IMR-90 (cell line): ENCODE measurements at regions of chr9 and their contacts with region 1.

Region 1: DNA sequence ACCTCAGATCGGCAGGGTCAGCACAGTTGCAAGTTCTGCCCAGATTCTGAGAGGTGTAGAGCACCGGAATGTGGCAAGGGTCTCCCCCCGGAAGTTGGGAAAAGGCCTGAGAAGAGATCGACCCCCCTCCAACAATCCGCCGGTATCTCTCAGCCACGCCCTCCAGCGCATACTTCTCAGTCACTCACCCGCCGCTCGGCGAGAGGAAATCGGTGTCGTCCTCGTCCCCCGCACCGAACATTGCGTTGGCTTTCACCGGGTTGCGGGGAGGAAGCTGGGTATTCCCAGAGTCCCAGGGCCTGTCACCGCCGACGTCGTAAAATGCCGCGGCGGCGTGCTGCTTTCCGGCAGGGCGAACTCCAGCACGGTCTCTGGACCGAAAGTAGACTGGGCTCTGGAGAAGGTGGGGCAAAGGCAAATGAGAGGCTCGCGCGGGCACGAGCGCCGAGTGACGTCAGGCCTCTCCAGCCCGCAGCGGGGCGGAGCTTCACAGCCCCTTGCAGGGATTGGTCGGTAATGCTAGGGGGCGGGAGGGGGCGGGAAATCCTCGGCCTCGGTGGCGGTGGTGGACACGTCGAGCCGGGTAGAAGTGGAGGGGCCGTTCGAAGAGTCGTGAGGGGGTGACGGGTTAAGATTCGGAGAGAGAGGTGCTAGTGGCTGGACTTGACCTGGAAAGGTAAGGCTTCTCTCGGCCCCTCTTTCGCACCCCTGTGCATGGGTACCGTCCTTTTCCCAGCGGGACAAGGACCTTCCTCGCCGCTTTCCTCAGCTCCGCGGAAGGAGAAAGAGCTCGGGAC is at the starts of genes FKBP15 and SLC31A1:
- DNase-seq: peak; percentile 99
- ATAC-seq: peak; percentile 97
- H3K4me3 ChIP-seq: peak within 1 kb of the TSS; percentile 86
- H3K27ac ChIP-seq: peak within 1 kb of the TSS; percentile 95
- H3K4me1 ChIP-seq: peaks cover 10% of the 10 kb centered on the region
- H3K27me3 ChIP-seq: no peaks in the 10 kb centered on the region
- CTCF ChIP-seq: no peak
- POLR2A ChIP-seq: peak; percentile 95
- RAD21 ChIP-seq: no peak
- total RNA-seq, gene FKBP15: 25.5 and 25.6 TPM in 2 replicates
- total RNA-seq, gene SLC31A1: 23.3 and 27.5 TPM in 2 replicates

Region 2: GRCh38 chr9:113187935-113188595 is 33.1 kb before region 1 on chr9:
- CTCF ChIA-PET with region 1: no interaction called
- POLR2A ChIA-PET with region 1: no interaction called
- dilution Hi-C with region 1: no loop called
- in situ Hi-C with region 1: no loop called
- intact Hi-C with region 1: loop called (anchors 2 kb)
- DNase-seq: peak; percentile 94
- ATAC-seq: peak; percentile 94
- H3K4me3 ChIP-seq: no peak overlapping the region
- H3K27ac ChIP-seq: peak overlapping the region; percentile 52
- H3K4me1 ChIP-seq: peaks cover 6% of the 10 kb centered on the region
- H3K27me3 ChIP-seq: no peaks in the 10 kb centered on the region
- CTCF ChIP-seq: no peak
- POLR2A ChIP-seq: no peak
- RAD21 ChIP-seq: no peak

Region 3: DNA sequence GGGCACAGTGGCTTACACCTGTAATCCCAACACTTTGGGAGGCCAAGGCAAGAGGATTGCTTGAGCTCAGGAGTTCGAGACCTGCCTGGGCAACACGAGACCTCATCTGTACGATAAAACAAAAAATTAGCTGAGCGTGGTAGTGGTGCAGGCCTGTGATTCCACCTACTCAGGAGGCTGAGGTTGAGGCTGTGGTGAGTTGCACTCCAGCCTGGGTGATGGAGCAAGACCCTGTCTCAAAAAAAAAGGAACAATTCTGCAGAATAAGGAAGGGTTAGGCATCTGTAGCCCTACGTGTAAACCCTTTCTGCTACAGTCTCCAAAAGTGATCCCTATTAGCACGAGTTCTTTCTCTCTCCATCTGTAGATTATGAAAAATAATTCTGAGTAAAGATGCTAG is 34.2 kb after region 1 on chr9:
- CTCF ChIA-PET with region 1: interaction called, 7 read pairs
- POLR2A ChIA-PET with region 1: interaction called, 19 read pairs
- dilution Hi-C with region 1: no loop called
- in situ Hi-C with region 1: no loop called
- intact Hi-C with region 1: no loop called
- DNase-seq: no peak
- ATAC-seq: no peak
- H3K4me3 ChIP-seq: no peak overlapping the region
- H3K27ac ChIP-seq: no peak overlapping the region
- H3K4me1 ChIP-seq: no peaks in the 10 kb centered on the region
- H3K27me3 ChIP-seq: no peaks in the 10 kb centered on the region
- CTCF ChIP-seq: no peak
- POLR2A ChIP-seq: no peak
- RAD21 ChIP-seq: no peak

Region 4: GRCh38 chr9:113275157-113276131 is 54.2 kb after region 1 on chr9 and contains the starts of genes CDC26 and PRPF4:
- CTCF ChIA-PET with region 1: interaction called, 4 read pairs
- POLR2A ChIA-PET with region 1: no interaction called
- dilution Hi-C with region 1: no loop called
- in situ Hi-C with region 1: no loop called
- intact Hi-C with region 1: loop called (anchors 1 kb)
- DNase-seq: peak; percentile 99
- ATAC-seq: peak; percentile 95
- H3K4me3 ChIP-seq: peak within 1 kb of the TSS; percentile 74
- H3K27ac ChIP-seq: peak within 1 kb of the TSS; percentile 88
- H3K4me1 ChIP-seq: peaks cover 2% of the 10 kb centered on the region; the same call in 1 of the 2 replicates
- H3K27me3 ChIP-seq: no peaks in the 10 kb centered on the region
- CTCF ChIP-seq: no peak
- POLR2A ChIP-seq: peak; percentile 97
- RAD21 ChIP-seq: no peak
- total RNA-seq, gene CDC26: 16.5 and 49.2 TPM in 2 replicates
- total RNA-seq, gene PRPF4: 32.5 and 38.0 TPM in 2 replicates

Region 5: GRCh38 chr9:113309204-113309813 is 88.1 kb after region 1 on chr9:
- CTCF ChIA-PET with region 1: no interaction called
- POLR2A ChIA-PET with region 1: no interaction called
- dilution Hi-C with region 1: no loop called
- in situ Hi-C with region 1: no loop called
- intact Hi-C with region 1: no loop called
- DNase-seq: peak; percentile 59
- ATAC-seq: peak; percentile 88
- H3K4me3 ChIP-seq: no peak overlapping the region
- H3K27ac ChIP-seq: no peak overlapping the region
- H3K4me1 ChIP-seq: no peaks in the 10 kb centered on the region
- H3K27me3 ChIP-seq: peaks cover 10% of the 10 kb centered on the region; the same call in 1 of the 2 replicates
- CTCF ChIP-seq: peak; percentile 87
- POLR2A ChIP-seq: no peak
- RAD21 ChIP-seq: peak; percentile 83